ENCODE measurements at regions of chr12 and their contacts with region 1.

Region 1: GRCh38 chr12:13211859-13212664 is 15.5 kb downstream of the EMP1 start:
- DNase-seq: peak; percentile 78
- H3K4me3 Mint-ChIP-seq: peak overlapping the region; percentile 0
- H3K27ac Mint-ChIP-seq: peak overlapping the region; percentile 20
- H3K4me1 Mint-ChIP-seq: peaks cover 43% of the 10 kb centered on the region
- H3K27me3 Mint-ChIP-seq: no peaks in the 10 kb centered on the region
- CTCF ChIP-seq: peak; percentile 69

Region 2: DNA sequence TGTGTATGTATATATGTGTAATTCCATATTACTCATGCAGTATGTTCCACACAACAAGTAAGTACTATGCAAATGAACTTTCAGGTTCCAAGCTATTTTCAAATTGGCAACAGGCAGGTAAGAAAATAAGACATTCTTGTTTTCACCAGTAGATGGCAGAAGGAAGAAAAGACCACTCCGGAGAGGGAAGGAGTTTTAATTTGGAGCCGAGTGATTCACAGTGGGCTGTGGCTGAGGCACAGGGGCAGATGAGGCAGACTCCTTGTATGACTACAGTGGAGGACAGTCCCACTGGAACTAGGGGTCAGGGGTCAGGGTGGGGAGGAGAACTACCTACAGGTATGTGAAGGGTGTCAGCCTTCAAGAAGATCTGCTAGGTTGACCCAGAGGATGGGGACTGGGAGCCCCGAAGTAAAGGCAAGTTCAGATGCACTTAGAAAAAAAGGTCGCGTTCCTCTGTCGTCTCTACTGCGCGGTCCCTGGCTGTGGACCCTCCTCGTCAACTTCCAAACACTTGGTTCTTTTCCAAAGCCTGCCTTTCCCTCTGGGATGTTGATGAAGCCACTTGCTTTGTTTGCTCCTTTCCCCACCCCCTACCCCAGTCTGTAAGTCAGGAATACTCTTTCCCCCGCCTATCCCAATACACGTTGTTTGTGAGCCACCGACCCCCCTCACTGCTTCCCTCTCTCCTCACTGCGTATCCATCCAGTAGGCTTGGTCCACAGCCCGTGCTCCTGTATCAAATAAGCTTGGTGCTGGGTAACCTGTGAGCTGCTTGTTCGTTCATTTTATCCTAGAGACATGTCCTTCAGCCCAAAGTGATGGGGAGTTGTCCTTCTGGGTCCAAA is 374.8 kb before region 1 on chr12:
- CTCF ChIA-PET with region 1: no interaction called
- POLR2A ChIA-PET with region 1: interaction called, 4 read pairs
- intact Hi-C with region 1: loop called (anchors 5 kb)
- DNase-seq: peak; percentile 83
- H3K4me3 Mint-ChIP-seq: no peak overlapping the region
- H3K27ac Mint-ChIP-seq: peak overlapping the region; percentile 30
- H3K4me1 Mint-ChIP-seq: peaks cover 56% of the 10 kb centered on the region
- H3K27me3 Mint-ChIP-seq: no peaks in the 10 kb centered on the region
- CTCF ChIP-seq: peak; percentile 62

Region 3: DNA sequence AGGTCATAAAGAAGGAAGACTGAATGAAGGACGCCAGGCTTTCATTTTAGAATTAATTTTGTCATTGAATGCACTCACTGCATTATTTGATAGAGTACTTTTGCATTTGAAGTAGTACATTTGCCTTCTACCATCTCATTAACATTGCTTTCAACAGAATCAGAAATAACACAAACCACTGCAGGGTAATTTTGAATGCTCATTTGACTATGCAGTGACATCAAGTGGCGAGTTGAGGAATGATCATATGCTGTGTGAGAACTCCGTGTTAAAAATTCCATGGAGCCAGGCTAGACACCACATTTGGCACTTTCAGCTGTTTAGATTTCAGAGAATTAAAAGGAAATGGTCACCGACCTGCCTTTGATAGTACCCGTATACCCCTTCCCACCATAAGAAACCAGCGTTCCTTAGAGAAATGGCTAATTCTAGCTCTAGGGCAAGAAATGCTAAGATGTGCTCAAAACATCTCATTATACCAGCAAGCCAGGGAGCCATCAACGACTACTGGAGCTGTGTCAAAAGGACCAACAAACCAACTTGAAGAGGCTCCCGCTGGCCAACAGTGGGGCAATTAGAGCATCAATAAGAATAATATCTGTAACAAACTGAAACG is 228.5 kb before region 1 on chr12:
- CTCF ChIA-PET with region 1: interaction called, 26 read pairs
- POLR2A ChIA-PET with region 1: no interaction called
- intact Hi-C with region 1: loop called (anchors 5 kb)
- DNase-seq: peak; percentile 65
- H3K4me3 Mint-ChIP-seq: no peak overlapping the region
- H3K27ac Mint-ChIP-seq: peak overlapping the region; percentile 0
- H3K4me1 Mint-ChIP-seq: peaks cover 6% of the 10 kb centered on the region
- H3K27me3 Mint-ChIP-seq: no peaks in the 10 kb centered on the region
- CTCF ChIP-seq: peak; percentile 66

Region 4: GRCh38 chr12:13094347-13094746 is 117.7 kb before region 1 on chr12:
- CTCF ChIA-PET with region 1: interaction called, 154 read pairs
- POLR2A ChIA-PET with region 1: interaction called, 243 read pairs
- intact Hi-C with region 1: loop called (anchors 1 kb)
- DNase-seq: peak; percentile 40
- H3K4me3 Mint-ChIP-seq: peak overlapping the region; percentile 26
- H3K27ac Mint-ChIP-seq: peak overlapping the region; percentile 80
- H3K4me1 Mint-ChIP-seq: peaks cover 47% of the 10 kb centered on the region
- H3K27me3 Mint-ChIP-seq: no peaks in the 10 kb centered on the region
- CTCF ChIP-seq: no peak

Region 5: GRCh38 chr12:13165617-13166041 is 46.4 kb before region 1 on chr12:
- CTCF ChIA-PET with region 1: interaction called, 17 read pairs
- POLR2A ChIA-PET with region 1: interaction called, 7 read pairs
- intact Hi-C with region 1: no loop called
- DNase-seq: peak; percentile 98
- H3K4me3 Mint-ChIP-seq: no peak overlapping the region
- H3K27ac Mint-ChIP-seq: peak overlapping the region; percentile 60
- H3K4me1 Mint-ChIP-seq: peaks cover 25% of the 10 kb centered on the region
- H3K27me3 Mint-ChIP-seq: no peaks in the 10 kb centered on the region
- CTCF ChIP-seq: no peak

Region 6: DNA sequence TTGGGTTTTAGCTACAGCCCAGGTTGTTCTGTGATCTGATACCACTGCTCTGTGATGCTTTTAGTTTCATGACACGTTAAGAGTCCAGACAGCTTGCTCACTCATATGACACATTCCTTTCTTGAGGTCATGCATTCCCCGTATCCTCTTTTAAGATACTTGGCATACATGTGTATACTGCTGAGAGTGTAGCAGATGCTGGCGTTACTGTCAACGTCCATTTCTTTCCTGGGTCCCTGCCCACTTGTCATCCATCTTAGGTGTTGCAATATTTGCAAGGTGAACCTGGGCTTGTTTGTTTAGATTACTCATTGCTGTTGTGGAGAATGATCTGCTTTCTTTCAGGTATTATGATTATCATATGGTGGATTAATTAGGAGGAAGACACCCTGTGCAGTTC is 24.7 kb before region 1 on chr12:
- CTCF ChIA-PET with region 1: interaction called, 19 read pairs
- POLR2A ChIA-PET with region 1: interaction called, 4 read pairs
- intact Hi-C with region 1: no loop called
- DNase-seq: peak; percentile 73
- H3K4me3 Mint-ChIP-seq: no peak overlapping the region
- H3K27ac Mint-ChIP-seq: peak overlapping the region; percentile 52
- H3K4me1 Mint-ChIP-seq: peaks cover 27% of the 10 kb centered on the region
- H3K27me3 Mint-ChIP-seq: no peaks in the 10 kb centered on the region
- CTCF ChIP-seq: no peak

Region 7: GRCh38 chr12:13233830-13234641 is 22.0 kb after region 1 on chr12:
- CTCF ChIA-PET with region 1: interaction called, 33 read pairs
- POLR2A ChIA-PET with region 1: no interaction called
- intact Hi-C with region 1: loop called (anchors 1 kb)
- DNase-seq: peak; percentile 77
- H3K4me3 Mint-ChIP-seq: no peak overlapping the region
- H3K27ac Mint-ChIP-seq: no peak overlapping the region
- H3K4me1 Mint-ChIP-seq: peaks cover 12% of the 10 kb centered on the region
- H3K27me3 Mint-ChIP-seq: no peaks in the 10 kb centered on the region
- CTCF ChIP-seq: peak; percentile 88

Region 8: DNA sequence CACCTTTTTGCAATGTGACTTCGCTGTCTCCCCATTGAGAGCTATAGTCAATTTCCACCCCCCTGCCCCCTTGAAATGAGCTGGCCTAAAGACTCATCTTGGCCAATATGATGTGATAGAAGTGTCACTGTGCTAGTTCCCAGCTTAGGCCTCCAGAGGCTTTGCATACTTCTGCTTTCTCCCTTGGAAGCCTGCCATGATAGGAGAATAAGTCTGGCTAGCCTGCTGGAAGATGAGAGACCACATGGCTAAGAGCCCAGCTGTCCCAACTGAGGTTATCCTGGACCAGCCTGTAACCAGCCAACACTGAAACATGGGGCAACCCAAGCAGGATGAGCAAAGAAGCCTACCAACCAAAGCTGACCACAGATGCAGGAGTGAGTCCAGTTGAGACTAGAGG is 572.4 kb after region 1 on chr12:
- CTCF ChIA-PET with region 1: no interaction called
- POLR2A ChIA-PET with region 1: no interaction called
- intact Hi-C with region 1: no loop called
- DNase-seq: no peak
- H3K4me3 Mint-ChIP-seq: no peak overlapping the region
- H3K27ac Mint-ChIP-seq: no peak overlapping the region
- H3K4me1 Mint-ChIP-seq: no peaks in the 10 kb centered on the region
- H3K27me3 Mint-ChIP-seq: peaks cover 14% of the 10 kb centered on the region
- CTCF ChIP-seq: no peak